ENCODE measurements at regions of chr15 and their contacts with region 1.

Region 1: DNA sequence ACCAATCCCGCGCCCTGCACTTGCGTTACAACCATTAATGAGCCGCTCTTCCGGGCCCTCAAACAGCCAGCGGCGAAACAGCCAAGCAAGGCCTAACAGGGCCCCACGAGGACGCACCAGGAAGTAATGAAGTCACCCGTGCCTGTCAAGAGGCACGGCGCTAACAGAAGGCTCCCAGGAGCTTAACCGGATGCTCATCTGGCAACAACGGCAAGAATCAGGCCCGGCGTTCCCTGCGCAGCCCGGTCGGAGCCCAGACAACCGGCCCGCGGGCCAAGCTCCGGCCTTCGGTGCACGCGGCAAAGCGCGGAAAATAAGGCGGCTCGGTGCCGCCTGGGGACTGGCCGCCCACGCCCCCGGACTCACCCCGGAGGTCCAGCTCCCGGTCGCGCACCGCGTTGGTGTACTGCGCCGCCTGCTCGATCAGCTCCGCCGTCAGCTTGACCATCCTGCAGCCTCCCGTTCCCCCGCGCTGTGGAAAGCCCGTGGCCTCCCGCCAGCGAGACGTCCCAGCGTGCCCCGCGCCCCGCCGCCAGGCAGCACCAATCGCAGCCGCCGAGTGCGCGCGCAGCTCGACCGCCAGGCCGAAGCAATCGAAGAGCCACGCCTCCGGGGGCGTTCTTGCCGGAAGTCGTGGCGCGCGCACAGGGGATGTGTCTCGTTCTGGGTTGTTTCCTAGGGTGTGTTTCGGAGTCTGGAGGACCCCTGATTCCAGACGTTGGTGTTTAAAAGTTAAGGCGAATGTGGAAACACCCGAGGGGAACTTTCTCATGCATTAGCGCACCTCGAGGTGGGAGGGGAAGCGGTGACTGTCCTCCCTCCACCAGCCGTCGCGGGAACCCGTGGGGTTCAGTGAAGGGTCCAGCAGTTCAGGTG is at the start of gene SNRPA1:
- DNase-seq: peak; percentile 94 to 97 (median 95)
- H3K4me3 ChIP-seq: peak within 1 kb of the TSS; percentile 93 to 96
- H3K4me3 Mint-ChIP-seq: peak within 1 kb of the TSS; percentile 93 to 99 (median 96)
- H3K27ac ChIP-seq: peak within 1 kb of the TSS; percentile 94
- H3K27ac Mint-ChIP-seq: peak within 1 kb of the TSS; percentile 89 to 99 (median 98)
- H3K4me1 ChIP-seq: peaks cover 47% of the 10 kb centered on the region
- H3K4me1 Mint-ChIP-seq: peaks cover 26 to 57% (median 39%) of the 10 kb centered on the region in 4 donors
- H3K27me3 ChIP-seq: no peaks in the 10 kb centered on the region
- H3K27me3 Mint-ChIP-seq: no peaks in the 10 kb centered on the region
- total RNA-seq, gene SNRPA1: 90.5 to 100 TPM

Region 2: DNA sequence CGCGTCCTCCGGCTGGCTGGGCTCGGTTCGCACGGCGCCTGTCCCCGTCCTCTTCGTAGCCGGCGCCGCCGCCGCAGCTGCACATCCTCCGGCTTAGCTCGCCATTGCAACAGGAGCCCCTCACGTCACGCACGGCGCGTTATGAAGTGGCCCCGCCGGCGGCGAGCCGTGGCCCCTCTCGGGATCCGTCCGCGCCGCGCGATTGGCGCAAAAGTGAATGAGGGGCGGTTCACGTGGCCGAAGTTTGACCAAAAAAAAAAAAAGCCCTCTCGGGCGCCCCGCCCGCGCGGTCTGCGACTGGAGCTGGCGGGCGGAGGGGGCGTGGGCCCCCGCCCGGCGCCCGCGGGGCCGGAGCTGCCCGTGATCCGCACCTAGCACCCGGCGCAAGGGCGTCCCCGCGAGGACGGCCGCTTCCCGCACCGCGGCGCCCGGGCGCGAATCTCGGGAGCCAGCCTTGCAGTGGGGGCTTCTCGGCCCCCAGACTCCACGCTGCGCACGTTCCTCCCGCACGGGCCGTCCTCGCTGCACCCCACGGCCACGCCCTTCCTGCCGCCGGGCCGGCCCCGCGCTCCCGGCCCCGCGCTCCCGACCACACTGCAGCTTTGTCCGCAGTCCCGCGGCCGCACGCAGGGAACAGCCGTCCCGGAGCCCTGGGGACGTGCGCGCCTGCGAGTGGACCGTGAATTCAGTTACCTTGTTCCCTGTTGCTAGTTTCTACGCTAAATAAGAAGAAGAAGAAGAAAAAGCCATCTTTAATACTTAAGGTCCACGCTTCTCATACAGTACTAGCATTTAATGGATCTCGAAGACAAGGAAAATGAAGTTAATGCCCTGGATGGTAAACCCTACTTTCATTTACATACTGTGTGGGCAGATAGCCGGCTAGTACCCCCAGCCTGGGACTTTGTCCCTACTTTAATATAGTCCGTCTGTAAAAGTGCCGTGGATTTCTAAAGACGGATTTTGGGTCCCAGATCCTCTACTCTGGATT is 42.8 kb before region 1 on chr15 and contains the start of gene CHSY1:
- CTCF ChIA-PET with region 1: no interaction called
- POLR2A ChIA-PET with region 1: interaction called, 36 read pairs
- intact Hi-C with region 1: loop called (anchors 1 kb)
- DNase-seq: peak; percentile 81 to 90 (median 86)
- H3K4me3 ChIP-seq: peak within 1 kb of the TSS; percentile 30 to 66
- H3K4me3 Mint-ChIP-seq: peak within 1 kb of the TSS; percentile 94 to 96 (median 95)
- H3K27ac ChIP-seq: peak within 1 kb of the TSS; percentile 42
- H3K27ac Mint-ChIP-seq: peak within 1 kb of the TSS; percentile 90 to 95 (median 93)
- H3K4me1 ChIP-seq: peaks cover 39% of the 10 kb centered on the region
- H3K4me1 Mint-ChIP-seq: peaks cover 29 to 43% (median 31%) of the 10 kb centered on the region in 4 donors
- H3K27me3 ChIP-seq: no peaks in the 10 kb centered on the region
- H3K27me3 Mint-ChIP-seq: no peaks in the 10 kb centered on the region
- total RNA-seq, gene CHSY1: 11.1 to 11.9 TPM

Region 3: DNA sequence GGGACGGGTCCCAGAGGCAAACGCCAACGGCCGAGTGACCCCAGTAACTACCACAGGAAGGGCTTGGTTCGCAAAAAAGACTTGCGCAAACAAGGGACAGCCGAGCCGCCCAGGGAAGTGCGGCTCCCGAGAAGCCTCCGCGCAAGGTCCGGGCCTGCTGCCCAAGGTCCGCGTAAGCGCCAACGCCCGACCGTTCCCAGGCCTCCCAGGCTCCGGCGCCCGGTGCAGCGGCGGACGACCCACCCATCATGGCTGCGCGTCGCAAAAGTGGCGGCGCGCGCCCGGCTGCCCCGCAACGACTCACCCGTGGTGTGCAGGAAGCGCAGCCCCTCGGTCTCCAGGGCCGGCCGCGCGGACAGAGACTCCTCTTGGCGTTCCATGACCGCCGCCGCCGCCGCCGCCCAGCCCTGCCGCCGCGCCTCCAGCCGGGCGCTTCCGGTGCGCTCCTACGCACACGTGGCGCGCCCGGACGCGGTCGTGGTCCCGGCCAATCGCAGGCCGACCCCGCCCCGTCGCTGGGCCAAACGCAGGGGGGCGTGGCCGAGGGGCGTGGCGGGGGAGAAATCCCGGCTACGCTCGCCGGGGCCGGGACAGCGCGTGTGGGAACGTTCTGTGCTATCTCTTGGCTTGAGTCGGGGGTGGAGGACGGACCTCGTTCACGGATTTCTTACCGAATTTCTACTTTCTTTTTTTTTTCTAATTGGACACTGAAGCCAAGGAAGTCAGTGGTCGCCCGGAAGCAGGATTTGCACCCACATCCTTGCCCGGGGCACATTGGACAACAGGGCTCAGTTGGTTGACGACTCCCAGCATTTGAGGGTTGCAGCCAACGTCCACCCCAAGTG is 17.7 kb before region 1 on chr15 and contains the start of gene SELENOS:
- CTCF ChIA-PET with region 1: interaction called, 27 read pairs
- POLR2A ChIA-PET with region 1: interaction called, 11 read pairs
- intact Hi-C with region 1: loop called (anchors 1 kb)
- DNase-seq: peak; percentile 81 to 89 (median 85)
- H3K4me3 ChIP-seq: peak within 1 kb of the TSS; percentile 74 to 93
- H3K4me3 Mint-ChIP-seq: peak within 1 kb of the TSS; percentile 93 to 97 (median 94)
- H3K27ac ChIP-seq: peak within 1 kb of the TSS; percentile 89
- H3K27ac Mint-ChIP-seq: peak within 1 kb of the TSS; percentile 91 to 99 (median 96)
- H3K4me1 ChIP-seq: peaks cover 25% of the 10 kb centered on the region
- H3K4me1 Mint-ChIP-seq: peaks cover 11 to 43% (median 21%) of the 10 kb centered on the region in 4 donors
- H3K27me3 ChIP-seq: no peaks in the 10 kb centered on the region
- H3K27me3 Mint-ChIP-seq: no peaks in the 10 kb centered on the region
- total RNA-seq, gene SELENOS: 49.1 to 53.8 TPM

Region 4: DNA sequence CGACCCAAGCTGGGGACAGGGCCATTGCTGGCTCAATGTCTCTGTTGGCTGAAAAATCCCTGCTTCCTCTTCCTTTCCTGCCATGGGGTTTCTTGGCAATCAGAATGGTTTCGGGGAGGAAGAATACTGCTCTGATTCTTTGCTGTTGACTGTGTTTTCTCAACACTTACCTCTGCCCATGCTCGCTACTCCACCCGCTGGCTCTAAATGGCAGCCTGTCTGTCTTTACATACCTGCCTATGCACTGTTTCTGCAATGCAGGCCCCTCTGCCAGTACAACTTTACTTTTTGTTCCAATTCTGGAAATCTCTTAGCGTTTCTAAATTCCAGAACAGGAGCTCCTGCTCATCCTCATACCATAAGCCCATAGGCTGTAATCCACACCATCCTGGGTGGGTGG is 38.4 kb after region 1 on chr15:
- CTCF ChIA-PET with region 1: no interaction called
- POLR2A ChIA-PET with region 1: interaction called, 8 read pairs
- intact Hi-C with region 1: loop called (anchors 1 kb)
- DNase-seq: no peak
- H3K4me3 ChIP-seq: peak overlapping the region in 1 of 2 donors; percentile 43
- H3K4me3 Mint-ChIP-seq: peak overlapping the region in 3 of 8 donors; percentile 26 to 49 (median 43)
- H3K27ac ChIP-seq: peak overlapping the region; percentile 29
- H3K27ac Mint-ChIP-seq: peak overlapping the region; percentile 30 to 96 (median 85)
- H3K4me1 ChIP-seq: peaks cover 20% of the 10 kb centered on the region
- H3K4me1 Mint-ChIP-seq: peaks cover 13 to 35% (median 22%) of the 10 kb centered on the region in 4 donors
- H3K27me3 ChIP-seq: no peaks in the 10 kb centered on the region
- H3K27me3 Mint-ChIP-seq: peaks cover 0 to 2% of the 10 kb centered on the region in 2 donors

Region 5: DNA sequence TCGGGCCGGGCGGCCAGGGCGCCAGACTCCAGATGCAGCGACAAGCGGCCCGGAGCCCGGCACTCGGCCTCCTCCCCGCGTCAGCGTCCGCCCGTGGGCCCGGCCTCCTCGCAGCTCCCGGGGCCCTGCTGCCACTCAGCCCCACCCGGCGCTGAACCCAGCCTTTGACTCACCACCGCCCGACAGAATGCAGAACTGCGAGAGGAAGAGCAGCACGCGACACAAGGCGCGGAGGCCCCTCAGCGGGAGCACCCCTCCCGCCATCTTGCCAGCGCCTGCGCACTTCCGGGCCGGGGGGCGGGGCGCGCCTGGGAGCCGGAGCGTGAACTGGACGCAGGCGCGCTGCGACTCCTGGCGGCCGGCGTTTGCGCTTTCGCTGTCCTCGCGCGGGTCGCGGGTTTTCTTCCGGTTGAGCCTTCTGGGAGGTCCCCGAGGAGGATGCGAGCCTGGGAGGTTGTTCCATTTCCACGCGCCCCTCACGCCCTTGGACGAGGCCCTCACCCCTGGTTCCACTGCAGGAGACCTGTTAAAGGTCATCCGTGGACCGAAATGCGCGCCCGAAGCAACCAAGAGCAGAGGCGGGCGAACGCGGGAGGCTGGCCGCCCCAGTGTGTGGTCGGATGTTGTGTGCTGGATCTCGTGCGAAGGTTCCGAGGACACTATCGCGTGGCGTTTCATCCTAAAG is 357.3 kb after region 1 on chr15 and contains the start of gene TM2D3:
- CTCF ChIA-PET with region 1: interaction called, 9 read pairs
- POLR2A ChIA-PET with region 1: interaction called, 38 read pairs
- intact Hi-C with region 1: loop called (anchors 1 kb)
- DNase-seq: peak; percentile 94 to 97 (median 96)
- H3K4me3 ChIP-seq: peak within 1 kb of the TSS; percentile 62 to 96
- H3K4me3 Mint-ChIP-seq: peak within 1 kb of the TSS; percentile 92 to 95 (median 95)
- H3K27ac ChIP-seq: peak within 1 kb of the TSS; percentile 97
- H3K27ac Mint-ChIP-seq: peak within 1 kb of the TSS; percentile 95 to 98 (median 97)
- H3K4me1 ChIP-seq: peaks cover 33% of the 10 kb centered on the region
- H3K4me1 Mint-ChIP-seq: peaks cover 19 to 53% (median 29%) of the 10 kb centered on the region in 4 donors
- H3K27me3 ChIP-seq: no peaks in the 10 kb centered on the region
- H3K27me3 Mint-ChIP-seq: no peaks in the 10 kb centered on the region
- total RNA-seq, gene TM2D3: 86.3 to 92.9 TPM